ENCODE measurements at regions of chr17 and their contacts with region 1.

Region 1: GRCh38 chr17:67544364-67544955 is 167.4 kb downstream of the PITPNC1 start:
- DNase-seq: no peak
- ATAC-seq: no peak
- H3K4me3 ChIP-seq: no peak overlapping the region
- H3K4me3 Mint-ChIP-seq: no peak overlapping the region
- H3K27ac ChIP-seq: no peak overlapping the region
- H3K27ac Mint-ChIP-seq: peak overlapping the region in 1 of 2 donors; percentile 55
- H3K4me1 ChIP-seq: peaks cover 4% of the 10 kb centered on the region
- H3K4me1 Mint-ChIP-seq: peaks cover 42 to 53% of the 10 kb centered on the region in 2 donors
- H3K27me3 ChIP-seq: no peaks in the 10 kb centered on the region
- H3K27me3 Mint-ChIP-seq: no peaks in the 10 kb centered on the region
- CTCF ChIP-seq: no peak

Region 2: DNA sequence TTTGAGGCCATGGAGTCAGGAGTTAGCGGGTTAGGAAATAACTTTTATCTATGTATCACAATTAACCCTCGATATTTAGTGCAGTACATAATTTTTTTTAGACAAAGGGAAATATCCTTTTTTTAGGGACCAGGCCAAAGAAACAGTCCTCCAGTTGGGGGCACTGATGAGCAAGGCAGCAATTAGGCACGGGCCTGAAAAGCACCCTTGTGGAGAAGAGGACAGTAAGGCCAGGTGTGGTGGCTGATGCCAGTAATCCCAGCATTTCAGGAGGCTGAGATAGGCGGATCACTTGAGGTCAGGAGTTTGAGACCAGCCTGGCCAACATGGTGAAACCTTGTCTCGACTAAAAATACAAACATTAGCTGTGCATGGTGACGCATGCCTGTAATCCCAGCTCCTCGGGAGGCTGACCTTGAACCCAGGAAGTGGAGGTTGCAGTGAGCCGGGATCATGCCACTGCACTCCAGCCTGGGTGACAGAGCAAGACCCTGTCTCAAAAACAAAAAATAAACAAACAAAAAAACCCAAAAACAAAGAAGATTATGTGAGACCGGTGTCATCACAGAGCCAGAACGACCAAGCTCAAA is 15.0 kb after region 1 on chr17:
- intact Hi-C with region 1: loop called (anchors 2 kb)
- DNase-seq: peak in 1 of 2 donors; percentile 19
- ATAC-seq: no peak
- H3K4me3 ChIP-seq: no peak overlapping the region
- H3K4me3 Mint-ChIP-seq: no peak overlapping the region
- H3K27ac ChIP-seq: no peak overlapping the region
- H3K27ac Mint-ChIP-seq: peak overlapping the region; percentile 43 to 78
- H3K4me1 ChIP-seq: no peaks in the 10 kb centered on the region
- H3K4me1 Mint-ChIP-seq: peaks cover 13 to 17% of the 10 kb centered on the region in 2 donors
- H3K27me3 ChIP-seq: no peaks in the 10 kb centered on the region
- H3K27me3 Mint-ChIP-seq: no peaks in the 10 kb centered on the region
- CTCF ChIP-seq: no peak

Region 3: GRCh38 chr17:67569873-67570272 is 25.4 kb after region 1 on chr17:
- intact Hi-C with region 1: no loop called
- DNase-seq: no peak
- ATAC-seq: no peak
- H3K4me3 ChIP-seq: no peak overlapping the region
- H3K4me3 Mint-ChIP-seq: no peak overlapping the region
- H3K27ac ChIP-seq: no peak overlapping the region
- H3K27ac Mint-ChIP-seq: peak overlapping the region; percentile 42 to 70
- H3K4me1 ChIP-seq: peaks cover 4% of the 10 kb centered on the region
- H3K4me1 Mint-ChIP-seq: peaks cover 25 to 44% of the 10 kb centered on the region in 2 donors
- H3K27me3 ChIP-seq: no peaks in the 10 kb centered on the region
- H3K27me3 Mint-ChIP-seq: no peaks in the 10 kb centered on the region
- CTCF ChIP-seq: no peak

Measured in natural killer cell (primary cell).